ENCODE measurements at regions of chr5 and their contacts with region 1.

Region 1: DNA sequence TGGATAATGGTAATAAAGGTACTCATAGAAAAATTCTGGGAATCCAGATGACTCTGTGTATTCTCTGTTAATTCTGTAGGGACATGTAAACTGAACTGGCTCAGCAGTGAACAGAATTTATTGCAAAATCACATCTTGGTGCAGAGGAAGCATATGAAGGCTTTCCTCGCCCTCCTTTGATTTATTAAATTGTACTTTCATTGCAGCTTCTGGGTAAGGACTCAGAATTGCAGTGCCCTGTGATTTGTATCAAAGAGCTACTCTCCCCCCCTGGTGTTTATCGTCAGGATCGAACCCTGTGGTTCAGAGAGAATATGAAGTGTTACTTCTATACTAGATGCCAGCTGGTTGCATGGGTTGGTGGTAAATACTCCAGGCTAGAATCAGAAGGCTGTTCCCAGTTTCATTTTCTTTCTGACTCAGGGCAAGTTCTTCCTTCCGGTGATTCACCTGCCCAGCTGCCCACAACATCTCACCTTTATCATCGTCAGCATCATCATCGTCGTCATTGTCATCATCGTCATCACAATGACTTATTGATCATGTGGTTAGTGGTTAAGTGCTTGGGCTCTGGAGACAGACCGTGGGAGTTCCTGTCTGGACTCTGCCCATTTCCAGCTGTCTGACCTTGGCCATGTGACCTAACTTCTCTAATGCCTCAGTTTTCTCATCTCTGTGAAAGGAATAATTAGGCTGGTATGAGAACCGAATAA is 238.8 kb downstream of the ARHGAP26 start:
- DNase-seq: peak; percentile 94
- H3K4me3 Mint-ChIP-seq: peak overlapping the region; percentile 36
- H3K27ac Mint-ChIP-seq: peak overlapping the region; percentile 93
- H3K4me1 Mint-ChIP-seq: peaks cover 73% of the 10 kb centered on the region
- H3K27me3 Mint-ChIP-seq: peaks cover 3% of the 10 kb centered on the region

Region 2: GRCh38 chr5:142922223-142922952 is 86.6 kb before region 1 on chr5:
- intact Hi-C with region 1: loop called (anchors 2 kb)
- DNase-seq: no peak
- H3K4me3 Mint-ChIP-seq: no peak overlapping the region
- H3K27ac Mint-ChIP-seq: no peak overlapping the region
- H3K4me1 Mint-ChIP-seq: peaks cover 36% of the 10 kb centered on the region
- H3K27me3 Mint-ChIP-seq: no peaks in the 10 kb centered on the region

Region 3: GRCh38 chr5:142981886-142982820 is 26.8 kb before region 1 on chr5:
- intact Hi-C with region 1: no loop called
- DNase-seq: no peak
- H3K4me3 Mint-ChIP-seq: no peak overlapping the region
- H3K27ac Mint-ChIP-seq: no peak overlapping the region
- H3K4me1 Mint-ChIP-seq: peaks cover 57% of the 10 kb centered on the region
- H3K27me3 Mint-ChIP-seq: no peaks in the 10 kb centered on the region

Region 4: GRCh38 chr5:143057580-143057999 is 48.6 kb after region 1 on chr5:
- intact Hi-C with region 1: loop called (anchors 1 kb)
- DNase-seq: no peak
- H3K4me3 Mint-ChIP-seq: no peak overlapping the region
- H3K27ac Mint-ChIP-seq: peak overlapping the region; percentile 95
- H3K4me1 Mint-ChIP-seq: peaks cover 62% of the 10 kb centered on the region
- H3K27me3 Mint-ChIP-seq: no peaks in the 10 kb centered on the region

Region 5: DNA sequence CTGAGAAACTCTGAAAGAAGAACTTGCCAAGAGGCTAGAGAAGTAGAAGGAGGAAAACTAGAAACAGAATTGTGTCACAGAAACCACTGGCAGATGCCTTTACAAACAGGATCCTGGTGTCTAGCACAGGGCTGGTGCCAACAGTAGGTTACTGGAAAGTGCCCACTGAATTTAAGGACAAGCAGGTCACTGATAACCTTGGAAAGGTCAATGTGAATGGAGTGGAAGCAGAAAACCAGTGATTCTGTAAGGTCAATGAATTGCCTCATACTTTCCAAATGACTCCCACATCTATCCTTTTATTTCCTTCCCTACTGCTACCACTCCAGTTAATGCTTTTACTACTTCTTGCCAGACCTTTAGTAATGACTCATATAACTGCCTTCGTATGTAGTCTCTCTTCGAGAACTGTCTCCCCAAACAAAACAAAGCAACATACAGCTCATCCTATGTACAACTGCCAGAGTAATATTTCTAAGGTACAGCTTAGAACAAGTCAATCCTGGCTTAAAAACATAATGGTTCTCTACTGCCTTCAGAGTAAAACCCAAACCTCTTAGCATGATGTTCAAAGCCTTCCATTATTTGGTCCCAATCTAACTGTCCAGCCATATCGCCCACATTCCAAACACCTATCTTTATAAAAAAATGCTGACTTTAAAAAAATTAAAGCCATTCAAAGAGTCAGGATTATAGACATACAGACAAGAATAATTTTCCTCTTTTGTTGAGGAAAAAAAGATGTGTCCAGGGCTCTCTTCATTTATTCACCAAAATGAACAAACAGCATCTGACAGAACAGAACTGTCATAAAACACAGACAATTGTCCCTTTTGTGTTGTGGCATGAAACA is 342.0 kb after region 1 on chr5:
- intact Hi-C with region 1: loop called (anchors 2 kb)
- DNase-seq: no peak
- H3K4me3 Mint-ChIP-seq: no peak overlapping the region
- H3K27ac Mint-ChIP-seq: no peak overlapping the region
- H3K4me1 Mint-ChIP-seq: peaks cover 42% of the 10 kb centered on the region
- H3K27me3 Mint-ChIP-seq: no peaks in the 10 kb centered on the region

Region 6: DNA sequence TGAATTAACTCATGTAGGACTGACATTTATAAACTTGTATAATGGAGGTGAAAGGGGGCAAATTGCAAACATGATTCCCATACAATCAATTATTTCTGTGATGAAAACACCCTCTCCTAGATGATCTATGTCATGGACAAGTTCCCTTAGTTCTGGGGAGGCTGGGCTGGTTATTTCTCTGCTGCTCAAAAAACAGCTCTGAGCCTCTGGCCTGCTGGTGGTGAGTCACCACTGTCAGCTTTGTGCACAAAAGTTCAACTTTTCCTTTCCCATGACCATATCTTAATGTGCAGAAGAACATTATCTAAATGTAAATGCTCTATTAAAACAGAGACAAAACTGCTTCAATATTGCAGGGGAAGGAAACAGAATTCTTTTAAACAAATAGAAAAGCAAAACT is 888.0 kb after region 1 on chr5:
- intact Hi-C with region 1: loop called (anchors 5 kb)
- DNase-seq: peak; percentile 58
- H3K4me3 Mint-ChIP-seq: no peak overlapping the region
- H3K27ac Mint-ChIP-seq: no peak overlapping the region
- H3K4me1 Mint-ChIP-seq: peaks cover 26% of the 10 kb centered on the region
- H3K27me3 Mint-ChIP-seq: no peaks in the 10 kb centered on the region